Esophagus muscularis mucosa (tissue), 4 donors: ENCODE measurements at regions of chr2 and their contacts with region 1.

Region 1: GRCh38 chr2:1675633-1676032 is 68.7 kb downstream of the PXDN start:
- DNase-seq: no peak
- H3K4me3 ChIP-seq: no peak overlapping the region
- H3K27ac ChIP-seq: peak overlapping the region; percentile 84 to 89 (median 88)
- H3K4me1 ChIP-seq: peaks cover 2 to 22% (median 21%) of the 10 kb centered on the region in 4 donors
- H3K27me3 ChIP-seq: no peaks in the 10 kb centered on the region
- CTCF ChIP-seq: peak; percentile 53 to 67 (median 65)
- EP300 ChIP-seq: peak; percentile 29
- POLR2A ChIP-seq: no peak

Region 2: GRCh38 chr2:1742681-1743395 is 67.2 kb after region 1 on chr2:
- intact Hi-C with region 1: loop called (anchors 2 kb)
- DNase-seq: peak; percentile 95
- H3K4me3 ChIP-seq: peak overlapping the region; percentile 67 to 93 (median 72)
- H3K27ac ChIP-seq: peak overlapping the region; percentile 93 to 100 (median 97)
- H3K4me1 ChIP-seq: peaks cover 30 to 69% (median 63%) of the 10 kb centered on the region in 4 donors
- H3K27me3 ChIP-seq: peaks cover 0 to 8% (median 0%) of the 10 kb centered on the region in 4 donors
- CTCF ChIP-seq: peak; percentile 67 to 78 (median 67)
- EP300 ChIP-seq: no peak
- POLR2A ChIP-seq: peak; percentile 15

Region 3: GRCh38 chr2:1817256-1818051 is 141.8 kb after region 1 on chr2:
- intact Hi-C with region 1: loop called (anchors 5 kb)
- DNase-seq: peak; percentile 97
- H3K4me3 ChIP-seq: peak overlapping the region in 3 of 4 donors; percentile 24 to 31 (median 24)
- H3K27ac ChIP-seq: peak overlapping the region; percentile 91 to 98 (median 92)
- H3K4me1 ChIP-seq: peaks cover 12 to 44% (median 33%) of the 10 kb centered on the region in 4 donors
- H3K27me3 ChIP-seq: peaks cover 0 to 3% (median 0%) of the 10 kb centered on the region in 4 donors
- CTCF ChIP-seq: peak; percentile 98 to 100 (median 98)
- EP300 ChIP-seq: peak; percentile 75
- POLR2A ChIP-seq: no peak